Breast epithelium (tissue), 4 donors: ENCODE measurements at regions of chr6 and their contacts with region 1.

Region 1: GRCh38 chr6:13814176-13814937 is at the start of gene MCUR1:
- DNase-seq: peak; percentile 75 to 78
- H3K4me3 ChIP-seq: peak within 1 kb of the TSS; percentile 62 to 99 (median 92)
- H3K27ac ChIP-seq: peak within 1 kb of the TSS; percentile 93 to 99
- H3K4me1 ChIP-seq: peaks cover 0 to 8% of the 10 kb centered on the region in 2 donors
- H3K27me3 ChIP-seq: no peaks in the 10 kb centered on the region
- CTCF ChIP-seq: peak in 1 of 3 donors; percentile 10
- POLR2A ChIP-seq: no peak
- total RNA-seq, gene MCUR1: 12.8 to 14.9 (median 14.1) TPM

Region 2: DNA sequence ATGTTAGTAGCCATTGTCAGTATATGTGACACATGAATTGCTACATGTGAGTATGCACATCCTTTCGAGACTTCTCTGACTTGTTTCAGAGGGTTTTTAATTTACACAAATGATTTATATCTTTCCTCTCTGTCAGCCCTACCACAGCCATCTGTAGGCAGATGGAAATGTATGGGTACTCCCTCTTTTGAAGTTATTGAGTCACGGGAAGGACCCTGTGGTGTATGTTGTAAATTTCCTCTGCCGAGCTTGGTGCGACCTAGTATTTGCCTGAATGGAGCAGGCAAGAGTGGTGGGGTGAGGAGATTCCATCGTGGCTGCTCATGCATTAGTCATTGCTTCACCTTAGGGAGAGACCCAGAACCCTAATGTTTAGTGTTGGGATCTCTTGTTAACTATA is 1603.5 kb after region 1 on chr6:
- intact Hi-C with region 1: loop called (anchors 5 kb)
- DNase-seq: no peak
- H3K4me3 ChIP-seq: no peak overlapping the region
- H3K27ac ChIP-seq: no peak overlapping the region
- H3K4me1 ChIP-seq: no peaks in the 10 kb centered on the region
- H3K27me3 ChIP-seq: no peaks in the 10 kb centered on the region
- CTCF ChIP-seq: no peak
- POLR2A ChIP-seq: no peak

Region 3: GRCh38 chr6:15429141-15430110 is 1615.1 kb after region 1 on chr6:
- intact Hi-C with region 1: no loop called
- DNase-seq: no peak
- H3K4me3 ChIP-seq: no peak overlapping the region
- H3K27ac ChIP-seq: no peak overlapping the region
- H3K4me1 ChIP-seq: peaks cover 0 to 9% of the 10 kb centered on the region in 2 donors
- H3K27me3 ChIP-seq: no peaks in the 10 kb centered on the region
- CTCF ChIP-seq: no peak
- POLR2A ChIP-seq: no peak